ENCODE measurements at regions of chr3 and their contacts with region 1.

Region 1: DNA sequence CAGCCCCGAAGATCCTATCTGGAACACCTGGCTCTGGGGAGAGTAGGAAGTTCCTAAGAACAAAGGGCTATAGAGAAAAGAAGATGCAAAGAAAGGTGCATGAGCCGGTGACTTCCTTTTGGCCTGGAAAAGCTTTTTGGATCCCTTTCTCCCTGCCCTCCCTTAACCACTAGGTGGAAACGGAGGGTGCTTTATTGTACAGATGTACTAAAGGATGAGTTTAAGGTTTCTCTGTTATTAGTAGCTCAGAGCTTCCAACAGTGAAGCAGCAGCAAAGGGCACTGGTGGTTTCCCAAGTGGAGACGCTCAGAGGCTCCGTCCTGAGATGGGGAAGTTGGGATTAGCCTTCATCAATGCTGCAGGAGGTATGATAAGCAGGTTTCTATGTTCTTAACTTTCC is 5.9 kb upstream of the ADGRG7 start:
- DNase-seq: peak in 2 of 4 donors; percentile 9
- ATAC-seq: peak; percentile 50
- H3K4me3 ChIP-seq: no peak overlapping the region
- H3K27ac ChIP-seq: no peak overlapping the region
- H3K4me1 ChIP-seq: no peaks in the 10 kb centered on the region
- H3K27me3 ChIP-seq: no peaks in the 10 kb centered on the region
- CTCF ChIP-seq: peak in 5 of 7 experiments; percentile 17 to 49 (median 37)
- POLR2A ChIP-seq: no peak

Region 2: GRCh38 chr3:100329800-100330489 is 273.5 kb before region 1 on chr3:
- intact Hi-C with region 1: loop called (anchors 10 kb)
- DNase-seq: peak; percentile 29 to 47 (median 47)
- ATAC-seq: peak; percentile 49
- H3K4me3 ChIP-seq: no peak overlapping the region
- H3K27ac ChIP-seq: no peak overlapping the region
- H3K4me1 ChIP-seq: peaks cover 4% of the 10 kb centered on the region
- H3K27me3 ChIP-seq: no peaks in the 10 kb centered on the region
- CTCF ChIP-seq: no peak
- POLR2A ChIP-seq: no peak

Measured in body of pancreas (tissue), 4 donors.